PC-9 (cell line): ENCODE measurements at regions of chr1 and their contacts with region 1.

Region 1: GRCh38 chr1:89987170-89987819 is 7.6 kb upstream of the ZNF326 start:
- DNase-seq: peak; percentile 45 to 76
- H3K4me3 ChIP-seq: no peak overlapping the region
- H3K27ac ChIP-seq: peak overlapping the region; percentile 8
- H3K4me1 ChIP-seq: peaks cover 75% of the 10 kb centered on the region
- H3K27me3 ChIP-seq: no peaks in the 10 kb centered on the region
- CTCF ChIP-seq: peak; percentile 99

Region 2: GRCh38 chr1:89780721-89781120 is 206.6 kb before region 1 on chr1:
- CTCF ChIA-PET with region 1: interaction called, 4 read pairs
- POLR2A ChIA-PET with region 1: no interaction called
- intact Hi-C with region 1: loop called (anchors 1 kb)
- DNase-seq: peak; percentile 15 to 78
- H3K4me3 ChIP-seq: no peak overlapping the region
- H3K27ac ChIP-seq: no peak overlapping the region
- H3K4me1 ChIP-seq: no peaks in the 10 kb centered on the region
- H3K27me3 ChIP-seq: no peaks in the 10 kb centered on the region
- CTCF ChIP-seq: peak; percentile 80

Region 3: GRCh38 chr1:89843281-89844121 is 143.8 kb before region 1 on chr1:
- CTCF ChIA-PET with region 1: interaction called, 10 read pairs
- POLR2A ChIA-PET with region 1: interaction called, 5 read pairs
- intact Hi-C with region 1: loop called (anchors 1 kb)
- DNase-seq: peak; percentile 45 to 67
- H3K4me3 ChIP-seq: peak overlapping the region; percentile 78
- H3K27ac ChIP-seq: peak overlapping the region; percentile 60
- H3K4me1 ChIP-seq: peaks cover 45% of the 10 kb centered on the region
- H3K27me3 ChIP-seq: no peaks in the 10 kb centered on the region
- CTCF ChIP-seq: peak; percentile 68

Region 4: DNA sequence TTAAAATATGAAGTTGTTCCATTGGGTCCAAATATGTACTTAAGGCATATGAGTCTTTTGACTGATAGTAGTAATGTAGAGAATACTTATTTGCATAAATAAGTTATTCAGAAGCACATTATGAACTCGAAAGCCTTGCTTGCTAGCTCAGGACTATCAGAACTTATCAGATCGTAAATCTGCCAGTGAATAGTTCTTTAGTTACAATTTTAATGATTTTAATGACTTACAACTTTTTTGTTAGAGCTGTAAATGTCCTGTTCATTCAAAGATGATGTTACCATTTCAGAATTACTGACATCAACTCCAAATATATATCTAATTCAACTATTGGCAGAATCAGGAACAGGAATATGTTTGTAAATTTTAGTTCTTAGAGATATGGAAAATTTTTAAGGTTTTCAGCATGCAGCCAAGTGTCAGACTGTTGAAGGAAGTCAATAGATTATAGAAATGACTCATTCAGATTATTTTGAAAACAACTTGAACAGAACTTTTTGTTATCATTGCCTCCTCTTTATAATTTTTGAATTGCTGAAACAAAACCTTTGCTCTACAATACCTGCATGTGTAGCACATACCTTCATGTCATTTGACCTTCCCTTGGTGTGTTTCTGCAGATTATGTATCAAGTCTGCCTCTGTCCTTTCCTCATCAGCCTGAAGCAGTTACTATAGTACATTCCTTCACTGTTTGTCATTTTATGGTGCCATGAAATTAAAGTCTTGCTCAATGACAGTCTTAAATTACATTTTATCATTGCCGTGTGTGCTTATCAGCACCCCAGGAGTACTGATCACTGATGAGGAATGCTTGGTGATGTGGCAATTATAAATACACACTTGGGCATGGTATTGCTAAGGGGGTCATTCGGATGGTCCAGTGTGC is 121.6 kb before region 1 on chr1:
- CTCF ChIA-PET with region 1: no interaction called
- POLR2A ChIA-PET with region 1: no interaction called
- intact Hi-C with region 1: loop called (anchors 1 kb)
- DNase-seq: peak; percentile 28 to 100
- H3K4me3 ChIP-seq: peak overlapping the region; percentile 16; the same call in 1 of the 2 replicates
- H3K27ac ChIP-seq: peak overlapping the region; percentile 91
- H3K4me1 ChIP-seq: peaks cover 65% of the 10 kb centered on the region
- H3K27me3 ChIP-seq: no peaks in the 10 kb centered on the region
- CTCF ChIP-seq: no peak

Region 5: DNA sequence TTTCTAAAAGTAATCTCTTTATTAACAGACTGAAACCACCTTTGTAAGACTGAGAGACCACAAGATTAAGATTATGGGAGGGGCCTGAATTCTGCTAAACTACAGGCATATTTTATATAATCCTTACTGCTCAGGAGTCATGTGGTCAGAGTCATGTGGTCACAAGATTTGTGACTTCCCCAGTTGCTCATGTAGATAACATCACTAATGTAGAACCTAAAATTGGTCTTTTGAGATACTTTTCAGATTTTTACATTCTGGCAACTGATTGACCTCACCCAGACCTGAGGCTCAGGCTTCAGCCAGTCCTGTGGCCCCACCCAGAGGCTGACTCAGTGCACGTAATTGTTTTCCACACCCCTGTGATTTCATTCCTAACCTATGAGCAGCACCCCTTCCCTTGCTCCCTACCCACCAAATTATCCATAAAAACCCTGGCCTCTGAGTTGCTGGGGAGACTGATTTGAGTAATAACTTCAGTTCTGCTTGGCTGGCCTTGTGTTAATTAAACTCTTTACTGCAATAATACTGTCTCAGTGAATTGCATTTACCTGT is 34.1 kb before region 1 on chr1:
- CTCF ChIA-PET with region 1: no interaction called
- POLR2A ChIA-PET with region 1: no interaction called
- intact Hi-C with region 1: loop called (anchors 5 kb)
- DNase-seq: peak; percentile 83 to 98
- H3K4me3 ChIP-seq: no peak overlapping the region
- H3K27ac ChIP-seq: peak overlapping the region; percentile 94
- H3K4me1 ChIP-seq: peaks cover 73% of the 10 kb centered on the region
- H3K27me3 ChIP-seq: no peaks in the 10 kb centered on the region
- CTCF ChIP-seq: no peak

Region 6: GRCh38 chr1:89974701-89975470 is 12.4 kb before region 1 on chr1:
- CTCF ChIA-PET with region 1: interaction called, 16 read pairs
- POLR2A ChIA-PET with region 1: interaction called, 4 read pairs
- intact Hi-C with region 1: loop called (anchors 1 kb)
- DNase-seq: peak; percentile 85 to 99
- H3K4me3 ChIP-seq: peak overlapping the region; percentile 48
- H3K27ac ChIP-seq: peak overlapping the region; percentile 99
- H3K4me1 ChIP-seq: peaks cover 67% of the 10 kb centered on the region
- H3K27me3 ChIP-seq: no peaks in the 10 kb centered on the region
- CTCF ChIP-seq: 0 out of 2 replicates have a peak, but pooled peaks have one; percentile 21

Region 7: DNA sequence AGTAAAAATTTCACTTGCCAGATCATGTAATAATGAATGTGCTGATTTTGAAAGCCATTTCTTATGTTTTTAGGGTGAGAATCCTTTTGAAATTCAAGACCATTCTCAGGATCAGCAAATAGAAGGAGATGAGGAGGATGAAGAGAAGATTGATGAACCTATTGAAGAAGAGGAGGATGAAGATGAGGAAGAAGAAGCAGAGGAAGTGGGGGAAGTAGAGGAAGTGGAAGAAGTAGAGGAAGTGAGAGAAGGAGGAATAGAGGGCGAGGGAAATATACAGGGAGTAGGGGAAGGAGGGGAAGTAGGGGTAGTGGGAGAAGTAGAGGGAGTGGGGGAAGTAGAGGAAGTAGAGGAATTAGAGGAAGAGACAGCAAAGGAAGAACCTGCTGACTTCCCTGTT is 40.0 kb after region 1 on chr1:
- CTCF ChIA-PET with region 1: no interaction called
- POLR2A ChIA-PET with region 1: no interaction called
- intact Hi-C with region 1: no loop called
- DNase-seq: no peak
- H3K4me3 ChIP-seq: no peak overlapping the region
- H3K27ac ChIP-seq: no peak overlapping the region
- H3K4me1 ChIP-seq: no peaks in the 10 kb centered on the region
- H3K27me3 ChIP-seq: no peaks in the 10 kb centered on the region
- CTCF ChIP-seq: no peak